Endothelial cell of umbilical vein (primary cell): ENCODE measurements at regions of chr3 and their contacts with region 1.

Region 1: GRCh38 chr3:149615731-149616221 is 42.0 kb downstream of the WWTR1 start:
- DNase-seq: peak; percentile 99
- H3K4me3 ChIP-seq: no peak overlapping the region
- H3K27ac ChIP-seq: peak overlapping the region; percentile 99
- H3K4me1 ChIP-seq: peaks cover 96% of the 10 kb centered on the region
- H3K27me3 ChIP-seq: no peaks in the 10 kb centered on the region
- CTCF ChIP-seq: no peak
- POLR2A ChIP-seq: peak; percentile 86

Region 2: DNA sequence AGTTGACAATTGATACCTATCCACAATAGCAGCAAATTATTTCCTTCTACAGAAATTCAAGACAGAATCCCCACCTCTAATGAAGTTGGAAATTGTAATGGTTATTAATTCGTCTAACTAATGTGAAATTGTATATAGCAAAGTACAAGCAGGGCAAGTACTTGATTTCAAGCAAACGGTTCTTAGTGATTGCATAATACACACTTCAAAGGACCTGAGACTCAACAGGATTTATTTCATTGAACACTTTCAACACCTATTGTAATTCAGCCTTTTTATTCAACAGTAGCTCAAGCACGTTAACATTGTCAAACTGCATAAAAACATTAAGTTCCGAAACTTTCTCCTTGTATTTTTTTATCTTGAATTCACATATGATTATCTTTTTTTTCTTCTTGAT is 958.3 kb before region 1 on chr3:
- CTCF ChIA-PET with region 1: no interaction called
- POLR2A ChIA-PET with region 1: no interaction called
- dilution Hi-C with region 1: no loop called
- intact Hi-C with region 1: no loop called
- DNase-seq: no peak
- H3K4me3 ChIP-seq: no peak overlapping the region
- H3K27ac ChIP-seq: no peak overlapping the region
- H3K4me1 ChIP-seq: no peaks in the 10 kb centered on the region
- H3K27me3 ChIP-seq: no peaks in the 10 kb centered on the region
- CTCF ChIP-seq: no peak
- POLR2A ChIP-seq: no peak

Region 3: GRCh38 chr3:149339931-149340309 is 275.9 kb before region 1 on chr3:
- CTCF ChIA-PET with region 1: no interaction called
- POLR2A ChIA-PET with region 1: no interaction called
- dilution Hi-C with region 1: no loop called
- intact Hi-C with region 1: loop called (anchors 1 kb)
- DNase-seq: peak; percentile 99
- H3K4me3 ChIP-seq: peak overlapping the region in 1 of 3 experiments; percentile 45
- H3K27ac ChIP-seq: peak overlapping the region; percentile 99
- H3K4me1 ChIP-seq: peaks cover 54% of the 10 kb centered on the region
- H3K27me3 ChIP-seq: no peaks in the 10 kb centered on the region
- CTCF ChIP-seq: no peak
- POLR2A ChIP-seq: peak; percentile 88

Region 4: GRCh38 chr3:149547413-149547812 is 68.4 kb before region 1 on chr3:
- CTCF ChIA-PET with region 1: no interaction called
- POLR2A ChIA-PET with region 1: no interaction called
- dilution Hi-C with region 1: no loop called
- intact Hi-C with region 1: loop called (anchors 1 kb)
- DNase-seq: no peak
- H3K4me3 ChIP-seq: no peak overlapping the region
- H3K27ac ChIP-seq: no peak overlapping the region
- H3K4me1 ChIP-seq: peaks cover 52% of the 10 kb centered on the region
- H3K27me3 ChIP-seq: no peaks in the 10 kb centered on the region
- CTCF ChIP-seq: no peak
- POLR2A ChIP-seq: no peak

Region 5: DNA sequence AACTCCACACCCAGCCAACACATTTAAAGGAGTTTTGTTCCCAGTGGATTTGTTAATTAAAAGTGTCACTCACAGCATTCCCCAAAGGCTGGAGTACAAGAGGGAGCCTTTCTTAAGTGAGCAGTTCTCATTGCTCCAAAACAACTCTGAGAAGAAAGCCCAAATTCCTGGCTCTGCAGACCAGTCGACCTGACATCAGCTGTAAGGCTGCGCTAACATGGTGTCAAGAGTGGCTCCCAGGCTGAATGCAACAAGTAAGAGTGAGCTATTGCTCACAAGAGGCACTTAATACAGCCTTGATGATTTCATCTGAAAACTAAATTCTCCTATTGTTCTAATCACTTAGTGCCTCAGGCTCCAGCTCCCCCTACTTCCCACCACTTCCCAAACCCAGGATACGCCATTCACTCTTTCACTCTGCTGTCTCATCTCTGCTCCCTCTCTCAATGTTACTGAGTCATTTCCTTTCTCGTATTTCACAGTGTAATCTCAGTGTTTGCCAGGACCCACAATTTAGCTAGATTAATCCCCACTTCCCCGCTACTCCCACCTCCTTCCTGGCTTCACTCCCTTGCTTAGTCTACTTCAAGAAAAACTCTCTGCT is 39.7 kb before region 1 on chr3:
- CTCF ChIA-PET with region 1: interaction called, 5 read pairs
- POLR2A ChIA-PET with region 1: interaction called, 8 read pairs
- dilution Hi-C with region 1: no loop called
- intact Hi-C with region 1: loop called (anchors 1 kb)
- DNase-seq: peak; percentile 99
- H3K4me3 ChIP-seq: no peak overlapping the region
- H3K27ac ChIP-seq: peak overlapping the region; percentile 91
- H3K4me1 ChIP-seq: peaks cover 90% of the 10 kb centered on the region
- H3K27me3 ChIP-seq: no peaks in the 10 kb centered on the region
- CTCF ChIP-seq: no peak
- POLR2A ChIP-seq: peak; percentile 79

Region 6: DNA sequence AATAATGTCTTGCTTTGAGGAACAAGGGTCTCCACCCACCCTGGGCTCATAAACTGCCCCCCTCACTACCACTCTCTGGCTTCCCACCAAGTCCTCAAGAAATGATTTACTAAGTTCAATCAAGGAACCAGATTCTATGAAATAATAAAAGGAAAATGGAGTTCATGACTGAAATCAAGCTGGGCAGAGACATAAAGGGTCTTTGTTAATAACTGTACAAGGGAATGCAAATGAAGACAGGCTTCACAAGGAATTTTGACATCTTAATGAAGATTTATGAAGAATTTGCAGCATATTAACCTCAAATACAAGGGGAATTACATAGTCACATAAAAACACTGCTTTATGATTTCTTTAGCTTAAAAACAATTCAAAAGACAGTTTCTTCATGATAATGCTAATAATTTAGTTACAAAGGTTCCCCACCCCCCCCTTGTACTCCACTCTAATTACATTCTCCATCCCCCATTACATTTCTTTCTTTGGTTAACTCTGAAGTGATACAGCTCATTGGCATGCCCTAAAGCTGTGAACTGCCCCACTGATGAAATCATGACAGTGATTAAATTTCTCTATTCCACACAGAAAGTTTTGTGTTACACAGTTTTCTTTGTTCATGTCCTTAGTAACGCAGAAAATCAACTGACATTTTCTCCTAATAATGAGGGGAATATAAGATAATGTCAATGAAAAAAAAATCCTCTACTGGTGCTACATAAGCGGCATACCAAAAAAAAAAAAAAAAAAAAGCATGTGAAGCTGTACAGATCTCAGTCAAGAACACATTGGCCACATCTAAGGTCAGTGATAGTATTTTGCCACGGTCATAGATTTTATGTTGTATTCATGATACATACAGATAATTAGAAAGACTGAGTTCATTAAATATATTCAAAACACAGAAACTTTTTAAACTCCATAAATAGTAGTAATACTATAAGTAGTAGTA is 12.4 kb before region 1 on chr3:
- CTCF ChIA-PET with region 1: interaction called, 8 read pairs
- POLR2A ChIA-PET with region 1: no interaction called
- dilution Hi-C with region 1: no loop called
- intact Hi-C with region 1: loop called (anchors 1 kb)
- DNase-seq: no peak
- H3K4me3 ChIP-seq: no peak overlapping the region
- H3K27ac ChIP-seq: peak overlapping the region; percentile 83
- H3K4me1 ChIP-seq: peaks cover 93% of the 10 kb centered on the region
- H3K27me3 ChIP-seq: no peaks in the 10 kb centered on the region
- CTCF ChIP-seq: no peak
- POLR2A ChIP-seq: no peak

Region 7: DNA sequence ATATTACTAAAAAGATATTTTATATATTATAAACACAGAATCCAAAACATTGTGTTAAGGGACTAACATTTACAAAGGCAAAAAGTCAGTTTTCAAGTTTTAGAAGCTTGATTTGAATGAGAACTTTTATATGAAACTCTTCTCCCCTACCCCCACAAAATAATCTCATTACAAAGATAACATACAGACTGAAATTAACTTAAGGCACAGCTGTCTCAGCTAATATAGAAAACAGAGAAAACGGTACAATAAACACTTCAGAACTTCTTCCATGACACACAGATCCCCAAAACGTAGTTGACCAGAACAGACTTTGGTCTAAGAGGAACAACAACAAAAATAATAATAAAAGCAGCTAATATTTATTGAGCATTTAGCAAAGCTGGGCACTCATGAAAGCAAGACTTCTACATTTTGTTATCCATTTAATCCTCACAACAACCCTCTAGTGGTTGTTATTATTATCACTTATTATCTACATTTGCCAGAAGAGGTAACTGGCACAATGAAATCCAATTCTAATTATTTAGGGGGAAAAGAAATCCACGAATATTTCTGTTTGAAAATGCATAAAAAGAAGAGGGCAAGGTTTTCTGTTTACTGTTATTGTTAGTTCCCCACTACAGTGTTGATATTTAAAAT is 286.8 kb after region 1 on chr3:
- CTCF ChIA-PET with region 1: no interaction called
- POLR2A ChIA-PET with region 1: no interaction called
- dilution Hi-C with region 1: no loop called
- intact Hi-C with region 1: no loop called
- DNase-seq: no peak
- H3K4me3 ChIP-seq: no peak overlapping the region
- H3K27ac ChIP-seq: no peak overlapping the region
- H3K4me1 ChIP-seq: peaks cover 2% of the 10 kb centered on the region
- H3K27me3 ChIP-seq: no peaks in the 10 kb centered on the region
- CTCF ChIP-seq: peak in 1 of 2 donors; percentile 9
- POLR2A ChIP-seq: no peak

Region 8: DNA sequence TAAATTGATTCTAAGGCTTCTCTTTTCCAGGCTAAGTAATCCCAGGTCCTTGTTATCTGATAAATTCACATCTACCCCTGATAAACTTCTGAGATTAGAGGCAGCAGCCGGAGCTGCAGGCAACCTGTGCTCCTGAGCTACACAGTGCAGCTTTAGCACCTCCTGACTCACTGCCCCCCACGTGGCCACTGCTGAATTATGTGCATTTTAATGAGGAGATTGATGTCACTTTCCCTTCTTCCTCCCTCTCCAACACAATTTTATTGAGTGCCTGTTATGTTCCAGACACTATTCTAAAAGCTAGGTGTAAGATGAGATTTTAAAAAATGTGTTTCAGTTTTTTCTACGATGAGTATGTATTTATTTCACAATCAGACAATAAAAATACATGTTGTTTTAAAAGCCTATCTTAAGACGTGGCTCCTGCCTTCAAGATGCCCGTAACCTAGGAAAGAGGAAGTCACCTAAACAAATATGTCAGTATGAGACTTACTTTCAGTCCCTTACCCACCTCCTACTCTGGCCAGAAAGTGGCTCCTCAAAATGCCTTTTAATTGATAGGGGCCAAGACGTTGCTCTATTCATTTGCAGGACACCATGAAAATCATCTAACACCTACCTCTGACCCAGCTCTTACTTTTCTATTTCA is 516.4 kb after region 1 on chr3:
- CTCF ChIA-PET with region 1: no interaction called
- POLR2A ChIA-PET with region 1: no interaction called
- dilution Hi-C with region 1: no loop called
- intact Hi-C with region 1: no loop called
- DNase-seq: no peak
- H3K4me3 ChIP-seq: no peak overlapping the region
- H3K27ac ChIP-seq: no peak overlapping the region
- H3K4me1 ChIP-seq: no peaks in the 10 kb centered on the region
- H3K27me3 ChIP-seq: peaks cover 6 to 16% of the 10 kb centered on the region in 2 experiments
- CTCF ChIP-seq: no peak
- POLR2A ChIP-seq: no peak